ENCODE measurements at regions of chr1 and their contacts with region 1.

Region 1: GRCh38 chr1:37486680-37487618 is 12.6 kb downstream of the ZC3H12A start:
- DNase-seq: peak; percentile 78 to 89
- H3K4me3 ChIP-seq: no peak overlapping the region
- H3K27ac ChIP-seq: peak overlapping the region; percentile 74 to 75
- H3K4me1 ChIP-seq: peaks cover 0 to 46% (median 40%) of the 10 kb centered on the region in 4 donors
- H3K27me3 ChIP-seq: no peaks in the 10 kb centered on the region
- CTCF ChIP-seq: peak; percentile 98 to 99

Region 2: GRCh38 chr1:37323486-37324377 is 163.2 kb before region 1 on chr1:
- intact Hi-C with region 1: no loop called
- DNase-seq: no peak
- H3K4me3 ChIP-seq: no peak overlapping the region
- H3K27ac ChIP-seq: no peak overlapping the region
- H3K4me1 ChIP-seq: no peaks in the 10 kb centered on the region
- H3K27me3 ChIP-seq: peaks cover 0 to 49% of the 10 kb centered on the region in 2 donors
- CTCF ChIP-seq: peak in 1 of 2 experiments; percentile 22

Region 3: GRCh38 chr1:37449936-37450335 is 37.0 kb before region 1 on chr1:
- intact Hi-C with region 1: loop called (anchors 2 kb)
- DNase-seq: no peak
- H3K4me3 ChIP-seq: no peak overlapping the region
- H3K27ac ChIP-seq: no peak overlapping the region
- H3K4me1 ChIP-seq: peaks cover 0 to 9% (median 2%) of the 10 kb centered on the region in 4 donors
- H3K27me3 ChIP-seq: peaks cover 0 to 42% of the 10 kb centered on the region in 2 donors
- CTCF ChIP-seq: no peak